Sigmoid colon (tissue), 7 donors: ENCODE measurements at regions of chr7 and their contacts with region 1.

Region 1: DNA sequence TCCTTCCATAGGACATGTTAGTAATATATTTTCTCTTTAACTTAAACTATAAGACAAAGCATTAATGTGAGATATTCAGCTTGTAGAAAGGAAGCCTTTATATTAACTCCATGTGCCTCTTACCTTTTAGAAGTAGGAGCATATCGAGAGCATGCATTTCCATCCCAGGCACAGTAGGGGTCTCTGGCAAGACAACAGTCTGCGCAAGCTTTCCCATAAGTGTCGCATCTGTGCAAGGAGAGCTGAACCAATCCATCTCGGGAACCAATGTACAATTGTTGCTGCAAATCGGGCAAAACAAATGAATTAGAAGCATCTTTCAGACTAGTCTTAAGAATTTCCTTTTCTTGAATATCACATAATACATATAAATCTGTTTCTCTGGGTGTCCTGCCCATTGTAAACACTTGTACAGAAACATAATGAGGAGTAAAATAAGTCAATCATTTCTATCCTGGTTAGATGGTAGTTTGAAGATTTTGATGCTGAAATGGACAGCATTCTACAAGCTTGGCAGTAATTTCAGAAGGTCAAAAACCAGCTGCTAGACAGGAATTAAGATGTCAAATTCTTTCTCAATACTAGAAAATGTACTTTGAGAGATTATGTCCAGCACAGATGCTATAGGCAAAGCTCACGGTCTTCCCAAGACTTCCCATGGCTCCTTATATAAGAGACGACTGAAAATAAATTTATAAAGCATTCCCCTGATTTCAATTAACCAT is 171.8 kb downstream of the SEMA3D start:
- DNase-seq: no peak
- H3K4me3 ChIP-seq: no peak overlapping the region
- H3K27ac ChIP-seq: no peak overlapping the region
- H3K4me1 ChIP-seq: peaks cover 0 to 7% (median 2%) of the 10 kb centered on the region in 4 donors
- H3K27me3 ChIP-seq: no peaks in the 10 kb centered on the region
- CTCF ChIP-seq: no peak
- EP300 ChIP-seq: no peak
- POLR2A ChIP-seq: no peak

Region 2: GRCh38 chr7:84317536-84317935 is 697.6 kb before region 1 on chr7:
- intact Hi-C with region 1: loop called (anchors 10 kb)
- DNase-seq: no peak
- H3K4me3 ChIP-seq: peak overlapping the region in 3 of 4 donors; percentile 34 to 48 (median 44)
- H3K27ac ChIP-seq: peak overlapping the region in 3 of 4 donors; percentile 71 to 80 (median 74)
- H3K4me1 ChIP-seq: peaks cover 0 to 4% (median 0%) of the 10 kb centered on the region in 4 donors
- H3K27me3 ChIP-seq: no peaks in the 10 kb centered on the region
- CTCF ChIP-seq: no peak
- EP300 ChIP-seq: no peak
- POLR2A ChIP-seq: no peak

Region 3: DNA sequence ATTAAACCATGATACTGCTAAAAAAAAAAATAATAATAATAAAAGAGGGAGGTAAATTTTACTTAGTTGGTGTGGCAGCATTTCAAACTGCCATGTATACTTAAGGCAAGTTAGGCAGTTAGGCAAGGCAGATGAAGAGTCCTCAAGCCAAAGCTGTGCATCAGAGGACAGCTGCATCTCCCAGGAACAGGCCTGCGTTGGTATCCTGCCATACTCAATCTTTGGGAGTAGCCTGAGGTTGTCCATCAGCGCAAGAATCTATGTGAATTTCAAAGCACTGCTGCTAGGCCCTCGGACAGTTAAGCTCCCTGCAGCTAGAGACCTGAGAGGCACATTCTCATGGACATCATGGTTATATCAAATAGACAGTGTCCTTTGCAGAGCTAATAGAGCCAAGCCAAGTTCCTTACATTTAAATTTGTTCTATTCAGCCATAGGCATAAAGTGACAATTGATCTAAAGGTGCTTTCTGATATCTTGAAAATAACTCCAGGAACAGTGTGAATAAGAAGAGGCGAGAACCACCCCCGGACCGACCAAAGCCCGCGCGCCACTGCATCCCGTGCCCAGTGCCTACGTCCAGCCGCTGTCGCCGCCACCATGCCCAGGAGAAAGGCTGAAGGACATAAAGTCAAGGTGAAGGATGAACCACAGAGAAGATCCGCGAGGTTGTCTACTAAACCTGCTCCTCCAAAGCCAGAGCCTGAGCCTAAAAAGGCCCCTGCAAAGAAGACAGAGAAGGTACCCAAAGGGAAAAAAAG is 138.9 kb before region 1 on chr7:
- intact Hi-C with region 1: no loop called
- DNase-seq: no peak
- H3K4me3 ChIP-seq: no peak overlapping the region
- H3K27ac ChIP-seq: no peak overlapping the region
- H3K4me1 ChIP-seq: no peaks in the 10 kb centered on the region
- H3K27me3 ChIP-seq: no peaks in the 10 kb centered on the region
- CTCF ChIP-seq: no peak
- EP300 ChIP-seq: no peak
- POLR2A ChIP-seq: no peak

Region 4: DNA sequence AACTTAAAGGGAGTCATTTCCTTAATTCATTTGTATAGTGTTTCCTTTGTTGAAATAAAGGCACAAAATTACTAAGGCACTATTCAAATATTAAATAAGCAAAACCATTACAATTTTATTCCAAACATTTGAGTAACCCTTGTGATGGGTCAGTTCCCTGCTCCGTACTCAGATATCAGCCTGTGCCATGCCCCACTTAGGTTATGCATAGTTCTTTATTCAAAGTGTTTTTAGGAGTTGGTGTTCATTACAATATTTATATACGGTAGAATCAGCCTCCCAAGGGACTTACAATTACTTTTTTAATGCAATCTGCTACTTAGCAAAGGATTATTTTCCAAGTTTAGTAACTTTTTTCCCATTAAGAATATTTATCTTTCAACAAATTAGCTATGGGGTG is 291.0 kb after region 1 on chr7:
- intact Hi-C with region 1: no loop called
- DNase-seq: no peak
- H3K4me3 ChIP-seq: no peak overlapping the region
- H3K27ac ChIP-seq: no peak overlapping the region
- H3K4me1 ChIP-seq: no peaks in the 10 kb centered on the region
- H3K27me3 ChIP-seq: no peaks in the 10 kb centered on the region
- CTCF ChIP-seq: no peak
- EP300 ChIP-seq: no peak
- POLR2A ChIP-seq: no peak